ENCODE measurements at regions of chr6 and their contacts with region 1.

Region 1: DNA sequence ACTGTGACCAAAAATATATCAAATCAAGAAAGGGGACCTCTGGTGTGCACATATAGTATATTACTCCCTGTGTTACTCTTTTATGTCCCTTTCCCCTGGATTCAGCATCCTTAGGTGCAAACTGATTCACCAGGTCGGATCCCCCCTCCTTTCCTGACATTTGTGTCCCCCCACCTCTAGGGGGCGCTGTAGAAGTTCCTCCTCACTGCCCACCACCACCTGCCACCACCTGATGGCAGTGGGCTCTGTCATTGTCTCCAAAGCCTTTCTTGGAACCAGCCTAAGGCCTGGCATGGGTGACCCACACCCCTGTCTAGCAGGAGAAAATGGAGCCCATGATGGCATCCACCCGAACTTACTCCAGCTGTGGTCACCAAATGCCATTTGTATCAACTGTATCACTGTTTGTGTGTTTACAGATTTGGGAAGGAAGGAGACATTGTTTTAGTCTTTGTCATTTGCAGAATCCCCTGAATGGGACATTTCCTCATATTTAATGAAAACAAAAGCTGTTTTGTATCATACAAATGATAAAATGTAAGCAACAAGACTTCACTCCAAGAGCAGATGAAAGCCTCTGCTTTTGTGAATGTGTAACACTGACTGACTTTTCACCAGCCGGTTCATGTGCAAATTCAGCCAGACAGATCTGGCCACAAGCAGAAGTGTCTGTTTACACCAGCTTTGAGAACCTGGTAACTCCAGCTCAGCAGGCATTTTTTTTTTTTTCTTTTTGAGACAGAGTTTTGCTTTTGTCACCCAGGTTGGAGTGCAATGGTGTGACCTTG is 66.2 kb downstream of the ARMC2 start:
- DNase-seq: no peak
- ATAC-seq: peak; percentile 56; the same call in 1 of the 2 replicates
- H3K4me3 ChIP-seq: no peak overlapping the region
- H3K27ac ChIP-seq: no peak overlapping the region
- H3K4me1 ChIP-seq: no peaks in the 10 kb centered on the region
- H3K27me3 ChIP-seq: peaks cover 8% of the 10 kb centered on the region; the same call in 1 of the 2 replicates
- CTCF ChIP-seq: peak; percentile 91

Region 2: GRCh38 chr6:108253241-108253640 is 661.2 kb before region 1 on chr6:
- CTCF ChIA-PET with region 1: no interaction called
- POLR2A ChIA-PET with region 1: interaction called, 12 read pairs
- in situ Hi-C with region 1: no loop called
- intact Hi-C with region 1: no loop called
- DNase-seq: no peak
- ATAC-seq: no peak
- H3K4me3 ChIP-seq: no peak overlapping the region
- H3K27ac ChIP-seq: no peak overlapping the region
- H3K4me1 ChIP-seq: no peaks in the 10 kb centered on the region
- H3K27me3 ChIP-seq: no peaks in the 10 kb centered on the region
- CTCF ChIP-seq: no peak

Region 3: DNA sequence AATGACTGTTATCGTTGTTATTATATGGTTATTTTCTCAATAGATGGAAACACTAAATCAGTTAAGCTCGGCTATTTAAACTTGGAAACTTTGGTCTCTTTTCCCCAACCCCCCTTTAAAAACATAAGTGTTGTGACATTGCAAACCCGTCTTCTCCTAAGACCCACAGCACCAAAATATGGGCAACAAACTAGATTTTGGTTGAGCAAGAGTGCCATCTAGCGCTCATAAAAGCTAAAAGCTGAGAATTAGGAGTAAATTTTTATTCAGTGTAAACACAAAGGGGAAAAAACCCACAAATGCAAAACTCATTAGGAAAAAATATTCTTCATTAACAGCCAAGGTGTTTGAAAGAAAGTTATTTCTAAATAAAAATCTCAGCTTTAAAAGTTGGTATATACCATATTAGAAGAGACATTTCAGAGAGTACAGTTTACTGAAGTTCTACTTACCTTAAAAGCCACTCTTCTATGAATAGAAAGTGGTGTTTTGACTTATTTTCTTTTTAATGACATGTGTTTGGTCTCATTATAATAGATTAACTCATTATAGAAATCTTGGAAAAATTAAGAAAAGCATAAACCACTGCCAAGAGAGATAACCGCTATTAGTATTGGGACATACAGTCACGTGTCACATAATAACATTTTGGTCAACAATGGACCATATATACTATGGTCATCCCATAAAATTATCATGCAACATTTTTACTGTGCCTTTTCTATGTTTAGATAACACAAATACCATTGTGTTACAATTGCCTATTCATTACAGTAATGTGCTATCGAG is 159.1 kb after region 1 on chr6:
- CTCF ChIA-PET with region 1: interaction called, 6 read pairs
- POLR2A ChIA-PET with region 1: interaction called, 4 read pairs
- in situ Hi-C with region 1: no loop called
- intact Hi-C with region 1: loop called (anchors 5 kb)
- DNase-seq: peak; percentile 60
- ATAC-seq: peak; percentile 82
- H3K4me3 ChIP-seq: no peak overlapping the region
- H3K27ac ChIP-seq: no peak overlapping the region
- H3K4me1 ChIP-seq: peaks cover 3% of the 10 kb centered on the region; the same call in 1 of the 2 replicates
- H3K27me3 ChIP-seq: no peaks in the 10 kb centered on the region
- CTCF ChIP-seq: peak; percentile 81; the same call in 1 of the 2 replicates